ENCODE measurements at regions of chr9 and their contacts with region 1.

Region 1: GRCh38 chr9:110183208-110184145 is 24.5 kb downstream of the C9orf152 start:
- DNase-seq: peak; percentile 79 to 82
- ATAC-seq: peak; percentile 81 to 89
- H3K4me3 ChIP-seq: no peak overlapping the region
- H3K27ac ChIP-seq: no peak overlapping the region; a peak in 1 of 6 replicates
- H3K4me1 ChIP-seq: peaks cover 29% of the 10 kb centered on the region
- CTCF ChIP-seq: peak; percentile 87
- EP300 ChIP-seq: no peak
- POLR2A ChIP-seq: no peak
- RAD21 ChIP-seq: peak; percentile 94

Region 2: GRCh38 chr9:110170357-110171257 is 12.9 kb before region 1 on chr9:
- CTCF ChIA-PET with region 1: interaction called, 22 read pairs
- POLR2A ChIA-PET with region 1: no interaction called
- DNase-seq: no peak
- ATAC-seq: no peak
- H3K4me3 ChIP-seq: no peak overlapping the region
- H3K27ac ChIP-seq: no peak overlapping the region
- H3K4me1 ChIP-seq: no peaks in the 10 kb centered on the region
- CTCF ChIP-seq: no peak
- EP300 ChIP-seq: no peak
- POLR2A ChIP-seq: no peak
- RAD21 ChIP-seq: no peak

Region 3: GRCh38 chr9:110207071-110207946 is 23.8 kb after region 1 on chr9:
- CTCF ChIA-PET with region 1: interaction called, 196 read pairs
- POLR2A ChIA-PET with region 1: no interaction called
- DNase-seq: no peak
- ATAC-seq: no peak; a peak in 3 of 6 replicates
- H3K4me3 ChIP-seq: no peak overlapping the region
- H3K27ac ChIP-seq: peak overlapping the region; percentile 3 to 48; a peak in 3 of 6 replicates
- H3K4me1 ChIP-seq: peaks cover 10% of the 10 kb centered on the region; the same call in 2 of the 3 replicates
- CTCF ChIP-seq: no peak
- EP300 ChIP-seq: no peak
- POLR2A ChIP-seq: no peak
- RAD21 ChIP-seq: no peak

Region 4: DNA sequence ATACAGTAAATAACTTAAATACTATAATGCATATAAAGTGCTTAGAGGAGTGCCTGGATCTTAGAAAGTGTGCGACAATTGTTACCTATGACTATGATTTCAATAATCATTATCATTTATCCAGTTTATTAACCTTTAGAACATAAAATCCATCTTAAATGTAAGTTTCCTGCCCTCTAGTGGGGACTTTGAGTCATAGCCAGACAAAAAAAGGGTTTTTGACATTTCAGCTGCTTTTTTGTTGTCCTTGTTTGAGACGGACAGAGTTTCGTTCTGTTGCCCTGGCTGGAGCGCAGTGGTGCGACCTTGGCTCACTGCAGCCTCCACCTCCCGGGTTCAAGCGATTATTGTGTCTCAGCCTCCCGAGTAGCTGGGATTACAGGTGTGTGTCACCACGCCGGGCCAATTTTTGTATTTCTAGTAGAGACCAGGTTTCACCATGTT is 34.2 kb after region 1 on chr9:
- CTCF ChIA-PET with region 1: interaction called, 196 read pairs
- POLR2A ChIA-PET with region 1: interaction called, 7 read pairs
- DNase-seq: peak in 1 of 2 experiments; percentile 63
- ATAC-seq: peak in 1 of 2 experiments; percentile 38; a peak in 2 of 6 replicates
- H3K4me3 ChIP-seq: no peak overlapping the region
- H3K27ac ChIP-seq: peak overlapping the region; percentile 31 to 38; a peak in 1 of 6 replicates
- H3K4me1 ChIP-seq: peaks cover 6% of the 10 kb centered on the region; the same call in 2 of the 3 replicates
- CTCF ChIP-seq: peak; percentile 85
- EP300 ChIP-seq: no peak
- POLR2A ChIP-seq: no peak
- RAD21 ChIP-seq: peak; percentile 69 to 82

Region 5: DNA sequence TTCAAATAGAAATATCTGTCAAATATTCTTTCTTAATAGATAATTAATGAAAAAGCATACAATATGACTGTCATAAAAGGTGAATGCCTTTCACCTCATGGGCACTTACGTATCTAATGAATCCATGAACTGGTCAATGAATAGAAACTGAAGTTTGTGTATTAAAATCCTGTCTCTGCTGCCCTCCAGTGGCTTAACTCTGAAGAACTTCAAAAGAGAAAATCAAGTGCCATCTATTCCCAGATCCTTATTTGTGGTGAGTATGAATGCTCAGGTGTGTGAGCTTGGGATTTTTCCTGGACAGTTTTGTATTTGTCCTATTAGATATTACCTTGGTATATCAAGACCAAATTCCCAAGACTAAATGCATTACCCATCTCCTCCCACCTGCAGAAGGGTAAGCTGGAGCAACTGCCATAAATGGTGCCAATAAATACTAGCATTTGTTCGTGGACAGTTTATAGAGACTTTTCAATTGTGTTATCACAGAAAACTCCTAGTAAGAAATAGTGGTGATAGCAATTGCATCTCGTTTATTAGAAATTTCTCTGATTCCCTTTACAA is 440.1 kb after region 1 on chr9:
- CTCF ChIA-PET with region 1: interaction called, 50 read pairs
- POLR2A ChIA-PET with region 1: no interaction called
- DNase-seq: peak; percentile 53 to 59
- ATAC-seq: peak; percentile 59 to 81; a peak in 5 of 6 replicates
- H3K4me3 ChIP-seq: no peak overlapping the region
- H3K27ac ChIP-seq: no peak overlapping the region
- H3K4me1 ChIP-seq: no peaks in the 10 kb centered on the region
- CTCF ChIP-seq: peak; percentile 83
- EP300 ChIP-seq: no peak
- POLR2A ChIP-seq: no peak
- RAD21 ChIP-seq: peak; percentile 84 to 92